ENCODE measurements at regions of chr6 and their contacts with region 1.

Region 1: DNA sequence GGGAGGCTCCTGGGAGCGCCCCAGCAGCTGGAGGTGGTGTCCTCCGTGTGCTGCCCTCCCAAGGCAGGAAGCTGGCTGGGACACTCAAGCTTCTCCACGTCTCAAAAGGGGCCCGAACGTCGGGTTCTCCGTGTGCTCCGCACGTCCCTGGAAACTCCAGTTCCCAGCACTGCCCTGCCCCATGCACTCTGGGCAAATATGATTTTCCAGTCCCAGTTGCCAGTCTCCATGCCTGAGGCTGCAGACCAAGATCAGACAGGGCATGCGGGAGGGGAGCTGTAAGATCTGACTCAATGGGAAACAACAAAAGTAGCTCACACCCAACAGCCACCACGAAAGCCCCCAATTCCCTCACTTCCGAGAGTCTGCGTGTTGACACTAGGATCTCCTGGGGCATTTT is 12.4 kb downstream of the C6orf132 start:
- DNase-seq: no peak
- H3K4me3 ChIP-seq: no peak overlapping the region
- H3K27ac ChIP-seq: peak overlapping the region in 1 of 2 donors; percentile 17
- H3K4me1 ChIP-seq: no peaks in the 10 kb centered on the region
- H3K27me3 ChIP-seq: no peaks in the 10 kb centered on the region
- CTCF ChIP-seq: no peak
- POLR2A ChIP-seq: no peak

Region 2: GRCh38 chr6:42099340-42100028 is 30.6 kb before region 1 on chr6:
- intact Hi-C with region 1: loop called (anchors 1 kb)
- DNase-seq: peak; percentile 71 to 72
- H3K4me3 ChIP-seq: no peak overlapping the region
- H3K27ac ChIP-seq: peak overlapping the region; percentile 77 to 91
- H3K4me1 ChIP-seq: peaks cover 0 to 12% of the 10 kb centered on the region in 2 donors
- H3K27me3 ChIP-seq: no peaks in the 10 kb centered on the region
- CTCF ChIP-seq: no peak
- POLR2A ChIP-seq: no peak